T-cell (primary cell): ENCODE measurements at regions of chr2 and their contacts with region 1.

Region 1: GRCh38 chr2:231961349-231962166 is at the start of gene DIS3L2:
- DNase-seq: peak; percentile 59 to 87 (median 77)
- ATAC-seq: peak; percentile 94 to 96 (median 95)
- H3K4me3 ChIP-seq: peak within 1 kb of the TSS; percentile 95 to 96
- H3K4me3 Mint-ChIP-seq: peak within 1 kb of the TSS; percentile 76 to 95 (median 94)
- H3K27ac ChIP-seq: peak within 1 kb of the TSS; percentile 49
- H3K27ac Mint-ChIP-seq: peak within 1 kb of the TSS; percentile 90 to 93
- H3K4me1 ChIP-seq: peaks cover 14 to 18% of the 10 kb centered on the region in 2 experiments
- H3K4me1 Mint-ChIP-seq: peaks cover 44 to 48% (median 45%) of the 10 kb centered on the region in 3 donors
- H3K27me3 ChIP-seq: no peaks in the 10 kb centered on the region
- H3K27me3 Mint-ChIP-seq: peaks cover 0 to under 1% of the 10 kb centered on the region in 2 donors
- total RNA-seq, gene DIS3L2: 55.0 to 70.9 (median 61.4) TPM

Region 2: GRCh38 chr2:231940795-231941194 is 20.8 kb before region 1 on chr2:
- CTCF ChIA-PET with region 1: no interaction called
- POLR2A ChIA-PET with region 1: no interaction called
- DNase-seq: no peak
- ATAC-seq: no peak
- H3K4me3 ChIP-seq: no peak overlapping the region
- H3K4me3 Mint-ChIP-seq: no peak overlapping the region
- H3K27ac ChIP-seq: no peak overlapping the region
- H3K27ac Mint-ChIP-seq: no peak overlapping the region
- H3K4me1 ChIP-seq: no peaks in the 10 kb centered on the region
- H3K4me1 Mint-ChIP-seq: no peaks in the 10 kb centered on the region
- H3K27me3 ChIP-seq: peaks cover 0 to 12% of the 10 kb centered on the region in 2 experiments
- H3K27me3 Mint-ChIP-seq: peaks cover 5 to 8% of the 10 kb centered on the region in 2 donors

Region 3: DNA sequence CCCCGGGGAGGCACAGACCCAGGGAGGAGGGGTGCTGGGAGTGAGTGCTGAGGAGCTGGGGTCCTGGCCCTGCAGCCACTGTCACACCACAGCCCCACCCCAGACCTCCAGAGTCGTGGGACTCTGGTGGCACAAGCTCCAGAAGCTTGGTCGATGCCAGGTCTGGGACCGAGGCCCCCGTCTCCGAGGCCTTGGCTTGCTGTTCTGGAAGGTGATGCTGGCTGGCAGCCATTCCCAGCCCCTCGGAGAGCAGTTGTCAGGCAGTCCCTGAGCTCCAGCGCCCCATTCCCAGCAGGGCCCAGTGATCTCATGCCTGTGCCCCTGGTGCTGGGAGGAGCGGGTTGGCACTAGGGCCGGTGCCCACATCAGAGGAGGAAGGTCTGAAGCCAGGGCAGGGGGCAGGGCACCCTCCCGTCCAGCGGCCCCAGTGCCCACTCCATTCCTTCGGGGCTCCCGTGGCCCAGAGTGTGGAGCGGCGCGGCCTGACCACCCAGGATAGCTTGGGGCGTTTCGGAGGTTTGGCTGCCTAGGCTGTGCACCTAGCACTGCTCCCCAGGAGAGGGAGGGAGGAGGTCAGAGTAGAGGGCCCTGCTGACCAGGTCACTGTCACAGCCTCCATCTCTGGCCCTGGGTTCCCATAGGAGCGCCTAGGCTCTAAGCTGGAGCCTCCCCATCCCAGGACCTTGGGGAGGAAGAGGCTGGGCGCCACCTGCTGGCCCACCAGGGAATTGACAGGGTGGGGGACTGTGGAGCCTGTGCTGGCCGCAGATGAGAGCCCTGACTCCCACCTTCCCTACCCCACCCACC is 477.6 kb after region 1 on chr2:
- CTCF ChIA-PET with region 1: interaction called in 1 of 2 experiments, 11 read pairs
- POLR2A ChIA-PET with region 1: no interaction called
- DNase-seq: peak in 15 of 35 experiments; percentile 13 to 45 (median 29)
- ATAC-seq: peak; percentile 38 to 50 (median 46)
- H3K4me3 ChIP-seq: no peak overlapping the region
- H3K4me3 Mint-ChIP-seq: no peak overlapping the region
- H3K27ac ChIP-seq: no peak overlapping the region
- H3K27ac Mint-ChIP-seq: no peak overlapping the region
- H3K4me1 ChIP-seq: peaks cover 0 to 10% of the 10 kb centered on the region in 2 experiments
- H3K4me1 Mint-ChIP-seq: peaks cover 8 to 11% (median 9%) of the 10 kb centered on the region in 3 donors
- H3K27me3 ChIP-seq: peaks cover 0 to 29% of the 10 kb centered on the region in 2 experiments
- H3K27me3 Mint-ChIP-seq: peaks cover 3 to 6% of the 10 kb centered on the region in 2 donors